Posterior vena cava (tissue), 2 donors: ENCODE measurements at regions of chr11 and their contacts with region 1.

Region 1: DNA sequence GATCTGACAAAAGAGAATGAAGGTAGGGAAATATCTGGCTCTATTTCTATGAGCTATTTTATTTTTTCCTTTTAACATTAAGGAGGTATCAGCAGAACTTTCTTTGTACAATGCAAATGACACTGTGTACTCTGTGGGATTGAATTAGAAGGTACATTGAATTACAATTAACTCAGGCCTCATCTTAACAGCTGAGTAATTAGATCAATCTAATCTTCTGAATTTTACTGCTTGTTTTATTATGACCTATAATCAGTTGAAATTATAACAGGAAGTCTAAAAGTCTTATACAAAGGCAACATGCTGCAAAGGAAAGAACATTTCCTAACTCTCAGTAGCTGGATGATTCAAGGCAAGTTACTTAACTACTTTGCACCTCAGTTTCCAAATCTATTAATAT is 69.8 kb downstream of the RELT start:
- DNase-seq: no peak

Region 2: DNA sequence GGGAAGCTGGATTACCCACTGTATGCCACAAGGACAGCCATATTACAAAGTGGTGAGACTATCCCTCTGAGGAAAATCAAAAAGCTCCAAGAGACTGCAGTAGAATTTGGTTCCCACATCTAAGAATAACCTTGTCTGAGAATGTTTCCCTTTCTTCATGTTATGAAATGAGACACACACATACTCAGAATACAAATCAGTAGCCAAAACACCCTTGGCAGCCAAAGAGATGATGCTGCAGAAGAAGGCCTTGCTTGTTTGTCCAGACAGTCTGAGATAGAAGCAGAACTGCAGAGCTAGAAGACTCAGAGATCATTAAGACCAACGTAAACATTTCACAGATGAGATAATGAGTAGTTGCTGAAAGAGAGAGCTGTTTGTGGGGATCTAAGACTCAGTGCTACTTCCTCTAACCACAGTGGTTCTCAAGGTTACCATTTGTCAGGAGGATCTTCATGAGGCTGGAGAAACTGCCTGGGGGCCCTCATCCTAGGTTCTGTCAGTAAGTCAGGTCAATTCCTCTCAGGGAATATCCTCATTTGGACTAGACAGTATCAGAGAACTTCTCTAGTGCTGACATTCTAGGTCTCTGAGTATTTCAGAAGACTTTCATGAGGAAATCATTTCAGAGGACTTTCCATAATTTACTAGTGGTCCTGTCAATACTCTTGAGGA is 30.9 kb before region 1 on chr11:
- intact Hi-C with region 1: no loop called
- DNase-seq: no peak

Region 3: DNA sequence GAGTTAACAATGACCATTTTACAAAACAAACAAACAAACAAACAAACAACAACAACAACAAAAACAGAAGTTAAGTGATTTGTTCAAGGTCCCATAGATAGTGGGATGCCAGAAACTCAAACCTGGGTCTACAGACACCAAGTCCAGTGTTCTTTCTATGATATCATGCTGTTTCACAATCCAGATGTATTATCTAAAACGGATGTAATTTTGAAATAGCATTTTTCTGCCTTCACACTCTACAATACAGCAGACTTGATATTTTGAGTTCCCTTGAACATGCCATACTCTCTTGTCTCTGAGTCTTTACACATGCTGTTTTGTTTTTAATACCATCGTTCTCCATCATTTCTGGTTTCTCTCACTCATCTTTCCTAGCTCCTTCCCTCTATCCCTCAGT is 34.7 kb after region 1 on chr11:
- intact Hi-C with region 1: loop called in 1 of 2 experiments (anchors 1 kb)
- DNase-seq: no peak